Vagina (tissue), 2 donors: ENCODE measurements at regions of chr18 and their contacts with region 1.

Region 1: GRCh38 chr18:21686282-21687105 is 18.1 kb downstream of the ABHD3 start:
- DNase-seq: no peak
- H3K4me3 ChIP-seq: no peak overlapping the region
- H3K27ac ChIP-seq: peak overlapping the region; percentile 54
- H3K4me1 ChIP-seq: peaks cover 13% of the 10 kb centered on the region
- H3K27me3 ChIP-seq: no peaks in the 10 kb centered on the region
- CTCF ChIP-seq: no peak
- POLR2A ChIP-seq: no peak

Region 2: DNA sequence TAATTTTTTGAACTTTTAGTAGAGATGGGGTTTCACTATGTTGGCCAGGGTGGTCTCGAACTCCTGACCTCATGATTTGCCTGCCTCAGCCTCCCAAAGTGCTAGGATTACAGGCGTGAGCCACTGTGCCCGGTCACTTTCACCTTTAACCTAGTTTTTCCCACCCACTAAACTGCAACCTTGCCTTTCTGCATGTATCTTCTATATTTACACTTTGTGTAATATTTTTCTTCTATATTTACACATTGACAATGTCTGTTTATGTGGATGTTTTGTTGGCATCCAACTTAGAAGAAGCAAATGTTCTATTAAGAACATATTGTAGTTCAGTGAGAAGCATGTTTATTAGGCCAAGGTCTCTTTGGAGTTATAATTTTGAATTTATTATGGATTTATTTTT is 47.7 kb before region 1 on chr18:
- intact Hi-C with region 1: loop called (anchors 1 kb)
- DNase-seq: no peak
- H3K4me3 ChIP-seq: no peak overlapping the region
- H3K27ac ChIP-seq: no peak overlapping the region
- H3K4me1 ChIP-seq: no peaks in the 10 kb centered on the region
- H3K27me3 ChIP-seq: no peaks in the 10 kb centered on the region
- CTCF ChIP-seq: no peak
- POLR2A ChIP-seq: no peak